ENCODE measurements at regions of chr19 and their contacts with region 1.

Region 1: DNA sequence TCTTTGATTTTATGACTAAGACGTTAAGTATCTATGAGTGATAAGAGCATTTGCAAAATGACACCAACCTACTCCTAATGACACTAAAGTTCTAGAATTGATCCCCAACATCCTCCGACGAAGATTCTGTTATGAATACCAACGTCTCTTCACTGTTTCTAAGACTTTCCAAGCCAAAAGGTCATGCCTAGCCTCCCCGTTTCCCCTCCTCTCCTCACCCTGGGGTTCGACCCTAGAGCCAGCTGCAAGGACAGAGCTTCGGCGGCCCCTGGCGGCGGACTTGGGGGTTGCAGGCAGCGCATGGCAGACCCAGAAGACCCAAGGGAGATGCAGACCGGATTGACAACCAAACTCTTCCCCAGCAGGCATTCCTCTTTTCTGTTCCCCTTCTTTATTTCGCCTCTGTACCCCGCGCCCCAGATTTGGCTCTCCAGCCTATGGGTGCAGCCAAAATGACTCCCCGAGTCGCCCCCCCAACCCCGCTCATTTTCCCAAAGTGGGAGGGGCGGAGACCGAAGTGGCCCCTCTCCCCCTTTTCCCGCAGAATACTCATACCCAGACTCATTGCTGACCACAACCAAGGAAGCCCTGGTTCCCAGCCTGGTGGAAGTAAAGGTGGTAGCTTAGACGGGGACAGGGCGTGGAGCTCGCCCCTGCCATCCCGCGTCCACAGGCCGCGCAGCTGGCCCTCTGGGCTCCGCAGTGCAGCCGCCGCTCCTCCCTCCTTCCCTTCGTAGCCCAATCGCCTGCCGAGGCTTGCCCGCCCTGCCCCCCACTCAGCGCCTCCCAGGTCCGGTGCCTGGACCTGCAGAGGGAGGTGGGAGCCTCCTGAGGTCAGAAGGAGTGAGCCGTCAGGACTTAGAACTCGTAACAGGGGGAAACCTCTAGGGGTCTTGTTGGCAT is 4.1 kb upstream of the EML2 start:
- DNase-seq: peak; percentile 91 to 95
- ATAC-seq: peak in 1 of 2 experiments; percentile 16; a peak in 3 of 6 replicates
- H3K4me3 ChIP-seq: peak overlapping the region; percentile 51; the same call in 2 of the 3 replicates
- H3K27ac ChIP-seq: peak overlapping the region; percentile 88 to 90
- H3K4me1 ChIP-seq: peaks cover 44% of the 10 kb centered on the region
- CTCF ChIP-seq: peak; percentile 99
- EP300 ChIP-seq: no peak
- POLR2A ChIP-seq: no peak
- RAD21 ChIP-seq: peak; percentile 99 to 100

Region 2: DNA sequence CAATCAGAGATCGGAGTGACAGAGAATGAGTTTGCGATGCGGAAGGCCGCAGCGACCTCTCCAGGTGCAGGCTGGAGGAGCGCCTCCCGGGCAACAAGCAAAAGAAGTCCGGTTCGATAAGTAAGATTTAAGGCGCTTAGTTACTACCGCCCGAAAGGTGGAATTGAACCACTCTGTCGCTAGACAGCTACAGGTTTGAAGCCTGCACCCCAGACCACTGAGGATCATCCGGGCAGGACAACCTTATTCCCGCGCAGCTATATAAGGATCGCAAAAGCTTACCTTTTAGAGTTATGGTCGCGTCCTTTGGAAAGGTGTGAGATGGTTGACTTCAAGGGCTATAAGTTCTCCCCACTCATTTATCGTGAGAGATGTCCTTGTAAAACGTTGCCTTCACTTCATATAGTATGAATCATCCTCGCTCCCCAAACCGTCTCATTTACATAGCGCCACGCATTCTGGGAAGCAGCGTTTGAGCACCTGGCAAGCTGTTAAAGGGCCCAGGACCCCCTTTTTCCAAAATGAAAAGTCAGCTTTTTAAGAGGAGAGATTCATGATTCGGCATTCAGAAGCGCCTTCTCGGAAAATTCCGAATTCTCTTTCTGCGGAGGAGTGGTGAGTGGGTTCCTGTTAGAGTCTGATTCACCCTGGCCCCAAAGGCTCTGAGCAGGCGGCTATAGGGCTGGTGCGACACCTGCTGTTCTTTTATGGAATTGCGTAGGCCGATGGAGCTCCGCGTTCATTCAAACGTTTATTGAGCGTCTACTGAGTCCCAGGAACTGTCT is 164.6 kb before region 1 on chr19:
- CTCF ChIA-PET with region 1: interaction called, 42 read pairs
- POLR2A ChIA-PET with region 1: no interaction called
- DNase-seq: peak; percentile 89 to 99
- ATAC-seq: peak; percentile 69 to 80
- H3K4me3 ChIP-seq: peak overlapping the region; percentile 42
- H3K27ac ChIP-seq: peak overlapping the region; percentile 81 to 89
- H3K4me1 ChIP-seq: peaks cover 13% of the 10 kb centered on the region
- CTCF ChIP-seq: peak; percentile 99
- EP300 ChIP-seq: no peak
- POLR2A ChIP-seq: no peak
- RAD21 ChIP-seq: peak; percentile 98 to 99

Region 3: GRCh38 chr19:45515081-45515624 is 128.1 kb before region 1 on chr19:
- CTCF ChIA-PET with region 1: interaction called, 43 read pairs
- POLR2A ChIA-PET with region 1: interaction called, 4 read pairs
- DNase-seq: no peak
- ATAC-seq: no peak
- H3K4me3 ChIP-seq: no peak overlapping the region
- H3K27ac ChIP-seq: peak overlapping the region; percentile 63 to 83
- H3K4me1 ChIP-seq: peaks cover 69% of the 10 kb centered on the region
- CTCF ChIP-seq: no peak
- EP300 ChIP-seq: no peak
- POLR2A ChIP-seq: no peak
- RAD21 ChIP-seq: no peak

Region 4: DNA sequence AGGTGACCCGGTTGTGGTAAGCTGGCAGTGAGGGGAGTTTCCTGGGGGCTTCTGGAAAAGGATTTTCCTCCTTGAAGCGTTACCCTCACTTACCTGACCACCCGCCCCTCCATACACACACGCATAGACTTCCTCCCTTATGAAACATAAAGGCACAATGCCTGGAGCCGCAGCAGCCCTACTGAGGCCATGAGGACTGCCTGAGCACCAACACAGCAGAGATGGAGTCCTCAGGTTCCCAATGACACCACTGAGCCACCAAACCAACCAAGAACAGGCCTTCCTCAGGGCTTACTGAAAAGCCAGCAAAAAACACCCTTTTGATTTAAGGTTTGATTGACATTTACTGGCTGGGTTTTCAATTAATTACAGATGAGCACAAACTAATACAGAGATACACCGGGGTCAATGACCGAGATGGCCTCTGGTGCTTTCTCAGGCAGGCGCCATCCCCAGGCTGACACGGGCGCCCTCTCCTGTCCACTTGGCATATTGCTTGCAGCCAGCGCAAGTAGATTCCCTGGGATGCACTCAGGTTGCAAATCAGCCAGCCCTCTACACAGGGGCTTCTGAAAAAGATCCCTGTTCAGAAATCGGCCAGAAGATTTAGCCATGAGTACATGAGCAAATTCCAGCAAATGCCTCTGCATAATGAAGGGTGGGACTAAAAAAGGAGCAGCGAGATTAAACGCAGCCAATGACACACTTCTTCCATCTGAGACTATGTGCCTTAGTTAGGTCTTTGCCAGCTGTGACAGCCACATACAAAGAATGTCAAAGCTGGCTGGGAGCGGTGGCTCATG is 73.5 kb before region 1 on chr19:
- CTCF ChIA-PET with region 1: interaction called, 49 read pairs
- POLR2A ChIA-PET with region 1: no interaction called
- DNase-seq: peak; percentile 62 to 76
- ATAC-seq: peak; percentile 86 to 91
- H3K4me3 ChIP-seq: no peak overlapping the region
- H3K27ac ChIP-seq: peak overlapping the region; percentile 65 to 83
- H3K4me1 ChIP-seq: peaks cover 26% of the 10 kb centered on the region
- CTCF ChIP-seq: peak; percentile 78
- EP300 ChIP-seq: no peak
- POLR2A ChIP-seq: no peak
- RAD21 ChIP-seq: peak; percentile 75 to 83

Region 5: GRCh38 chr19:45601524-45602374 is 41.5 kb before region 1 on chr19 and contains the start of gene GPR4:
- CTCF ChIA-PET with region 1: interaction called, 273 read pairs
- POLR2A ChIA-PET with region 1: interaction called, 15 read pairs
- DNase-seq: no peak
- ATAC-seq: peak in 1 of 2 experiments; percentile 57; a peak in 3 of 6 replicates
- H3K4me3 ChIP-seq: peak within 1 kb of the TSS; percentile 29
- H3K27ac ChIP-seq: peak within 1 kb of the TSS in 1 of 2 experiments; percentile 54; a peak in 3 of 6 replicates
- H3K4me1 ChIP-seq: peaks cover 24% of the 10 kb centered on the region
- CTCF ChIP-seq: no peak
- EP300 ChIP-seq: no peak
- POLR2A ChIP-seq: no peak
- RAD21 ChIP-seq: no peak
- polyA plus RNA-seq, gene GPR4: 0.10 TPM in 1 of 2 replicates, not detected in the other

Region 6: DNA sequence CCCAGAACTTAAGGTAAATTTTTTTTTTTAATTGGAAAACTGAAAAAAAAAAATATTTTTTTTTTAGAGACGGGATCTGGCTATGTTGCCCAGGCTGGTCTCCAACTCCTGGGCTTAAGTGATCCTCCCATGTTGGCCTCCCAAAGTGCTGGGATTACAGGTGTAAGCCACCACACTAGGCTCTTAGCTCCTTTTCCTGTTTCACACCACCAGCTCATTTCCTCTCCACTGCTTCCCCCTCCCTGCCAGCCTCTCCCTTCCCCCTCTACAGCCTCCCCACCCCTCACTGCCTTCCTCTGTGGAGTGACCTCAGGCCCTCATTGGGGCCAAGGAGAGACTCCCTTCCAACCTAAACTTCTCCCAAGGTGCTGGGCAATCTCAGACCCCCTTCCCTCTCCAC is 20.5 kb after region 1 on chr19:
- CTCF ChIA-PET with region 1: interaction called, 40 read pairs
- POLR2A ChIA-PET with region 1: interaction called, 3 read pairs
- DNase-seq: no peak
- ATAC-seq: no peak
- H3K4me3 ChIP-seq: no peak overlapping the region
- H3K27ac ChIP-seq: no peak overlapping the region
- H3K4me1 ChIP-seq: peaks cover 11% of the 10 kb centered on the region
- CTCF ChIP-seq: no peak
- EP300 ChIP-seq: no peak
- POLR2A ChIP-seq: no peak
- RAD21 ChIP-seq: no peak

Region 7: GRCh38 chr19:45717166-45717982 is 74.1 kb after region 1 on chr19:
- CTCF ChIA-PET with region 1: interaction called, 10 read pairs
- POLR2A ChIA-PET with region 1: no interaction called
- DNase-seq: peak; percentile 99 to 100
- ATAC-seq: peak; percentile 92 to 97
- H3K4me3 ChIP-seq: peak overlapping the region; percentile 80
- H3K27ac ChIP-seq: peak overlapping the region; percentile 92 to 96
- H3K4me1 ChIP-seq: peaks cover 39% of the 10 kb centered on the region
- CTCF ChIP-seq: no peak; the same call in 2 of the 3 replicates
- EP300 ChIP-seq: peak in 1 of 2 experiments; percentile 42; a peak in 1 of 5 replicates
- POLR2A ChIP-seq: peak; percentile 41
- RAD21 ChIP-seq: no peak

Region 8: GRCh38 chr19:45848922-45849321 is 205.6 kb after region 1 on chr19:
- CTCF ChIA-PET with region 1: no interaction called
- POLR2A ChIA-PET with region 1: no interaction called
- DNase-seq: peak; percentile 48 to 69
- ATAC-seq: peak; percentile 72 to 84
- H3K4me3 ChIP-seq: no peak overlapping the region
- H3K27ac ChIP-seq: no peak overlapping the region
- H3K4me1 ChIP-seq: no peaks in the 10 kb centered on the region
- CTCF ChIP-seq: no peak
- EP300 ChIP-seq: no peak
- POLR2A ChIP-seq: no peak
- RAD21 ChIP-seq: no peak

Region 9: DNA sequence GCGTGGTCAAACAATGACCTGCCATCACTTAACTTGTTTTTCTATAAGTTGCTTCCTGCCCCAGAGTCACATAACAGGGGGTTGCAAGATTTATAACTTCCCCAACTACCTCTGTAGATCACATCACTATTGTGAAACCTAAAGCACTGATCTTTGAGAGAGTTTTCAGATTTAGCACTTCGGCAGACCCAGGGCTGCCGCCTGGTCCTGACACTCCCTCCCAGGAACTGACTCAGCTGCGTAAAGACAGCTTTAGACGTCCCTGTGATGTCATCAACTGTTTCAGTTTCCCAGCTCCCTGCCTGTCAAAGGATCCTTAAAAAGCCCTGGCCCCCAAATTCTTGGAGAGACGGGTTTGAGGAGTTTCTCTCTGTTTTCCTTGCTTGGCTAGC is 538.1 kb after region 1 on chr19:
- CTCF ChIA-PET with region 1: no interaction called
- POLR2A ChIA-PET with region 1: no interaction called
- DNase-seq: peak in 1 of 2 experiments; percentile 65
- ATAC-seq: peak; percentile 73 to 80
- H3K4me3 ChIP-seq: no peak overlapping the region
- H3K27ac ChIP-seq: peak overlapping the region; percentile 32 to 70; a peak in 5 of 6 replicates
- H3K4me1 ChIP-seq: peaks cover 34% of the 10 kb centered on the region
- CTCF ChIP-seq: no peak
- EP300 ChIP-seq: no peak
- POLR2A ChIP-seq: no peak
- RAD21 ChIP-seq: no peak